Thyroid gland (tissue), 4 donors: ENCODE measurements at regions of chr20 and their contacts with region 1.

Region 1: DNA sequence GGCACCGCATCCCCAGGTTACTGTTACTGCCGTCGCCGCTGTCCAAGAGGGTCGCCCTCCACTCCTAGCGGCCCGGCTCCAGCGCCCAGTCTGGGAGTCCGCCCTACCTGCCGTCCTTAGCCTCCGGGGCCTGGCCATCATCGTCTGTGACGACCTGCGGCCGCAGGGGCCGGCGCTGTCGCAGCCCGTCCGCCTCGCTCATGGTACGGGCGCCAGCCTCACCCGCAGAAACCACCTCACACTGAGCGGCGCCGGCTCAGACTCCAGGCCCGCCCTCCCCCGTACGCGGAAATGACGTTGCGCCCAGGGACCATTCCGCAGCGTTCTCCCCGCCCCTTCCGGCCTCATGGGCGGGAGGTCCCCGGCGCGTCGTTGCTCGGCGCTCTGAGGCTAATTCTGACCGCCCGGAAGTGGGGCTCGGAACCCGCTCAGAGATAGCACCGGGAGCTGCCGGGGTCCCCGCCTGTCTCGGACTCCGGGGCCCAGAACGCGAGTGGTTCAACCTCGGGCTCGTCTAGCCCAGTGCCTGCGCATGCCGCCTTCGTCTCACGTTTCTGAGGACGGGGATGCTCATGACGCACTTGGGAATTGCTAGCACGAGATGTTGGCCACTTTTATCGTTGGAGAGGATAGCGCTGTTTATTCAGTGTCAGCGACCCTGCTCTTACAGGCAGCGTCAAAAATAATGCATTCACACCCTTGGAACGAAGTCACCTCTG is at the start of gene APMAP:
- DNase-seq: peak; percentile 96
- H3K4me3 ChIP-seq: peak within 1 kb of the TSS; percentile 49 to 91 (median 71)
- H3K27ac ChIP-seq: peak within 1 kb of the TSS; percentile 82 to 95 (median 88)
- H3K4me1 ChIP-seq: peaks cover 52 to 57% of the 10 kb centered on the region in 2 donors
- H3K27me3 ChIP-seq: no peaks in the 10 kb centered on the region
- CTCF ChIP-seq: peak in 1 of 6 experiments; percentile 7
- POLR2A ChIP-seq: peak; percentile 95 to 100
- total RNA-seq, gene APMAP: 171 to 205 (median 186) TPM

Region 2: DNA sequence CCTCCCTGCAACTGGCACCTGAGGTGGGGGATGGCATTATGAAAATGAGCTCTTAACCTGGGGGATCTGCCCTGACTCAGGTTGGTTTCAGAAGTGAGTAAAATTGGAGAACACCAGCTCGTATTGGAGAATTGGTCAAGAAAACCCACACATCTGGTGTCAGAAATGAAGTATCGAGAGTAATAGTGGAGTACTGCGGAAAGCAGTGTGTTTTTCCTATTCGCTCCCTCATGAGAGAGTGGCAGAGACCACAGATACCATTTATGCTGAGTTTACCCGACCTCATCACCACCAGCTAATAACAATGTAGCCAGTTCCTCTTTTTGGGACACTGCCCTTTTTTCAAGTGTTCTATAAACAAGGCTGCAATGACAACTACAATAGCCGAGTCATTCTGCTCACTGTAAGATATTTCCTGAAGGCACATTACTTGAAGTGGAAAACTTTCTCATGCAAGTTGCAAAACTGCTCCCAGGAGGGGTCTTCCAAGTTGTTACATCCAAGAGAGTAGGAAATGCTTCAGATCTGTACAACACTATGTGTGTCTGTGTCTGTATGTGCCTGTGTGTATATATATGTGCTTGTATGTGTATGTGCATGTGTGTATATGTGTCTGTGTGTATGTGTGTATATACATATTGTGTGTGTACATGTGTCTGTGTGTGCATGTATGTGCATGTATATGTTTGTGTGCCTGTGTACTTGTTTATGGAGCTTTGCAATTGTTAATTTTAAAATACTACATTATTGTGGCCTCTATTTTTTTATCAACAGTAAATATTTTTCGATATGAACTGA is 149.5 kb before region 1 on chr20:
- intact Hi-C with region 1: no loop called
- DNase-seq: no peak
- H3K4me3 ChIP-seq: no peak overlapping the region
- H3K27ac ChIP-seq: no peak overlapping the region
- H3K4me1 ChIP-seq: peaks cover 0 to 13% of the 10 kb centered on the region in 2 donors
- H3K27me3 ChIP-seq: no peaks in the 10 kb centered on the region
- CTCF ChIP-seq: no peak
- POLR2A ChIP-seq: no peak

Region 3: DNA sequence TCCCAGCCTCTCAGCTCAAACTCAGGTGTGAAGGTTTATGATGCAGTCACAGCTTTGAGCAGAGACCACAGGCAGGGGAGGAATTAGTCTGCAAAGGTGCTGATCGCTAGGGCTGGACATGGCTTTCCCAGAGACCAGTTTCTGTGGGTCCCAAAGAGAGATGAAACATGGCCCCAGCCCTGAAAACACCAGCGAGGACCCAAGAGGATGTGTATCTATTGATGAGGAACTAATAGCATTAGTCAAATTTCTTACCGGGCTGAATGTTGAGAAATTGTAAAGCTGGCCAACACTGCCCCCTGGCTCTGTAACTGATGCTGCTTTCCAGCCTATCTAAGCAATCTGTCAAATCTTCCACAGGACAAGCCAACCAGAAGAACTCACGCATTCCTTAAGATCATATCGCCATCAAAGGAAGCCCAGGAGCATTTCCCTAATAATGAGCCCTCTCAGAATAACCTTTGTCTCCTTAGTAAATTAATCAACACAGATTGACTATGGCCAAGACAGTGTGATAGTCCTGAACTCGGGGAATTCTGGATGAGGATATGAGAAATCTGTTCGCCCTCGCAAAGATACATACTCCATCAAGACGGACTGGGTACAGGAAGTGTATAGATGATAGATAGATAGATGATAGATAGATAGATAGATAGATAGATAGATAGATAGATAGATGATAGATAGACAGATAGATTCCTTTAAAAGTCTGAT is 73.1 kb after region 1 on chr20:
- intact Hi-C with region 1: loop called (anchors 2 kb)
- DNase-seq: peak; percentile 75
- H3K4me3 ChIP-seq: no peak overlapping the region
- H3K27ac ChIP-seq: peak overlapping the region in 2 of 3 donors; percentile 42 to 51
- H3K4me1 ChIP-seq: peaks cover 0 to 15% of the 10 kb centered on the region in 2 donors
- H3K27me3 ChIP-seq: no peaks in the 10 kb centered on the region
- CTCF ChIP-seq: peak in 5 of 6 experiments; percentile 51 to 94 (median 86)
- POLR2A ChIP-seq: no peak

Region 4: GRCh38 chr20:25178563-25179438 is 186.2 kb after region 1 on chr20:
- intact Hi-C with region 1: loop called (anchors 2 kb)
- DNase-seq: peak; percentile 49 to 54
- H3K4me3 ChIP-seq: no peak overlapping the region
- H3K27ac ChIP-seq: peak overlapping the region; percentile 11 to 56 (median 30)
- H3K4me1 ChIP-seq: peaks cover 7 to 18% of the 10 kb centered on the region in 2 donors
- H3K27me3 ChIP-seq: no peaks in the 10 kb centered on the region
- CTCF ChIP-seq: peak; percentile 37 to 98 (median 87)
- POLR2A ChIP-seq: no peak

Region 5: DNA sequence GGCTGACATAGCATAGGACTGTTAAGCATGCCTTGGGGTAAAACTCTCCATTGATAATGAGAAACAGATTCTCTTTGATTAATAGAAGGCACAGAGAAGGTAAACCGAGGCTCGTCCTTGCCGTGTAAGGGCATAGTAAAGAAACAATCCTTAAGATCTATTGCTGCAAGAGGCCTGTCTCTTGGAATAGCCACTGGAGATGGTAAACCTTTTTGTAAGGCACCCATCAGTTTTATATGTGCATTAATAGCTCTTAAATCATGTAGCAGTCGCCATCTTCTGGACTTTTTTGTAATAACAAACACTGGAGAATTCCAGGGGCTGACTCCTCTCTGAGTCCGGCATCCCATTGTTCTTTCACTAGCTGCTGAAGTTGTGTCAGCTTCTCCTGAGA is 406.4 kb after region 1 on chr20:
- intact Hi-C with region 1: loop called (anchors 5 kb)
- DNase-seq: peak; percentile 34 to 41
- H3K4me3 ChIP-seq: no peak overlapping the region
- H3K27ac ChIP-seq: no peak overlapping the region
- H3K4me1 ChIP-seq: peaks cover 8 to 13% of the 10 kb centered on the region in 2 donors
- H3K27me3 ChIP-seq: no peaks in the 10 kb centered on the region
- CTCF ChIP-seq: peak; percentile 10 to 73 (median 60)
- POLR2A ChIP-seq: no peak

Region 6: DNA sequence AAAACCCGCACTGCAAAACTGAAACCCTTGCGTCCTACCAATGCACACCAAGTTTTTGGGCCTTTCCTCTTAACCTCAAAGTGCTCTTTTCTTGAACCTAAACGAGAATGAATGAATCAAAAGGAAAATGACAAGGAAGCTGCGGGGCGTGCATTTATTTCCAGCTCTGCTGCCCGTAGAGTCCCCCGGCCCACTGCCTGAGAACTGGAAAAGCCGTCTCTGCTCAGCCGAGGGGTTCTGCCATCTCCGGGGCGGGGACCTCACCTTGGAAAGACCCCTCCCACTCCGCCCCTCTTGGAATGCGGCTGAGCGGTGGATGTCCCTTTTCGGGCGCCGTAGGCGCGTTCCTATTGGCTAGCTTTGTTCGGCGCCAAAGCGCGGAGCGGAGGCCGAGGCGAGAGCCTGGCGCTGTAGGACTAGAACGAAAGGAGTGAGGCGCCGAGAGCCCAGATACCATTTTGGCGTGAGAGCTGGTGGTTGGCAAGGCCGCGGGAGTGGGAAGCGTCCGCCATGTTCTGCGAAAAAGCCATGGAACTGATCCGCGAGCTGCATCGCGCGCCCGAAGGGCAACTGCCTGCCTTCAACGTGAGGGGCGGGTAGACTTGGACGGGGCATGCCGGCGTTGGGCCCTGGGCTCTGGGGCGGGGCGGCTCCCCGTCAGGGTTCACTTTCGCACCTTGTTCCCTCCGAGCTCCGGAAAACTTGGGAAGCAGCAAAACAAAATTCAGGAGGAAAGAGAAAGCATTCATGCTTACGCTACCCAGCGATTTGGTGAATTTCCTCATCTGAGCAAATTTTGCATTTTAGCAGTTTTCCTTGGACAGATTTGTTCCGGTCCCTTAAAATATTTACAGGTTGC is 414.9 kb after region 1 on chr20 and contains the start of gene GINS1:
- intact Hi-C with region 1: loop called (anchors 5 kb)
- DNase-seq: peak; percentile 81 to 87
- H3K4me3 ChIP-seq: peak within 1 kb of the TSS; percentile 20 to 59 (median 53)
- H3K27ac ChIP-seq: peak within 1 kb of the TSS in 2 of 3 donors; percentile 18 to 36
- H3K4me1 ChIP-seq: peaks cover 5 to 7% of the 10 kb centered on the region in 2 donors
- H3K27me3 ChIP-seq: no peaks in the 10 kb centered on the region
- CTCF ChIP-seq: no peak
- POLR2A ChIP-seq: no peak
- total RNA-seq, gene GINS1: 0.44 to 1.5 (median 0.89) TPM in 3 of 4 donors, not detected in the other